MCF 10A (cell line): ENCODE measurements at regions of chr1 and their contacts with region 1.

Region 1: GRCh38 chr1:229479660-229480399 is 28.3 kb downstream of the NUP133 start:
- DNase-seq: no peak
- H3K4me3 Mint-ChIP-seq: no peak overlapping the region
- H3K27ac Mint-ChIP-seq: peak overlapping the region; percentile 0
- H3K4me1 Mint-ChIP-seq: no peaks in the 10 kb centered on the region
- H3K27me3 Mint-ChIP-seq: no peaks in the 10 kb centered on the region
- CTCF ChIP-seq: no peak

Region 2: DNA sequence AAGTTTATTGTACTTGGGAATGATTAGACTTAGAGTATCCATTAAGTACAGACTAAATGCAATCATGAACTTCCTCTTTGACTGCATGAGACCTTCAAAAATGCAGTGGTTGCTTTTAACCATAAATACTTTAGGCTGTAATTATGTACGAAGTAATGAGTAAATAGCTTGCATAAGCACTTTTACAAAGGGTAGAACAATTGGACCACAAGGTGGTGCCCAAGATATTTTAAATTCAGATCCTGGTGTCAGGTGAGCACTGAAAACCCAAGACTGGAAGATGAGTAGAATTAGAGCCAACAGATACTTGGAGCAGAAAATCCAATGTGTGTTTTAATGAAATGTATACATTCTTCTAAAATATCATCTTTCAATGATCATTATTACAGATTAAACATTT is 787.9 kb before region 1 on chr1:
- CTCF ChIA-PET with region 1: interaction called, 10 read pairs
- POLR2A ChIA-PET with region 1: interaction called, 3 read pairs
- intact Hi-C with region 1: loop called (anchors 1 kb)
- DNase-seq: peak; percentile 84
- H3K4me3 Mint-ChIP-seq: no peak overlapping the region
- H3K27ac Mint-ChIP-seq: no peak overlapping the region
- H3K4me1 Mint-ChIP-seq: peaks cover 18% of the 10 kb centered on the region
- H3K27me3 Mint-ChIP-seq: no peaks in the 10 kb centered on the region
- CTCF ChIP-seq: peak; percentile 85

Region 3: GRCh38 chr1:229440851-229441537 is 38.8 kb before region 1 on chr1:
- CTCF ChIA-PET with region 1: interaction called, 10 read pairs
- POLR2A ChIA-PET with region 1: interaction called, 3 read pairs
- intact Hi-C with region 1: no loop called
- DNase-seq: peak; percentile 36
- H3K4me3 Mint-ChIP-seq: no peak overlapping the region
- H3K27ac Mint-ChIP-seq: no peak overlapping the region
- H3K4me1 Mint-ChIP-seq: no peaks in the 10 kb centered on the region
- H3K27me3 Mint-ChIP-seq: no peaks in the 10 kb centered on the region
- CTCF ChIP-seq: no peak

Region 4: DNA sequence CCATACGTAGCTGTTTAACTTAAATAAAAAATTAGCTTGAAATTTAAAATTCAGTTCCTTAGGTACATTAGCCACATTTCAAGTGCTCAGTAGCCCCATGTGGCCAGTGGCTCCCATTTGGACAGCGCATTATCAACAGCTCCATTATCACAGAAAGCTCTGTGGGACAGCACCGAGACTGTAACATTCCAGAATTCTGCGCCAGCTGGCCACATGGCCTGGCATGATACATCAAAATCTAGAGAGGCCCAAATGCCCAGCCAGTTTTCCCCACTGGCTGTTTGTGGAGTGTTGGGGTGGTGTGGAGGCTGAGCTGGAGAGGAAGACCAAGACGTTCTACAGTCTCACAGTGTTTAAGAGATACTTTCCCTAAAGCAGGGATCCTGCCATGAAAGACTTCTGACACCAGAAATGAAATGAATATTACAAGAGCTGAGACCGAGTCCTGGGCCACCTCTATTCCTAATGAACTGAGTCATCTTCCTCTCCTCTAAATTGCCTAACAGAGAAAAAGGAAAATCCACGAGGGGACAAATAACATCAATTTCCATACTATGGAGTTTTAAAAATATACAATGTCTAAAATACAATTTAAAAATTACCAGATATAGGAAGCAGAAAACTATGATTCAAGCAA is 18.7 kb before region 1 on chr1:
- CTCF ChIA-PET with region 1: interaction called, 50 read pairs
- POLR2A ChIA-PET with region 1: interaction called, 6 read pairs
- intact Hi-C with region 1: no loop called
- DNase-seq: no peak
- H3K4me3 Mint-ChIP-seq: no peak overlapping the region
- H3K27ac Mint-ChIP-seq: no peak overlapping the region
- H3K4me1 Mint-ChIP-seq: peaks cover 4% of the 10 kb centered on the region
- H3K27me3 Mint-ChIP-seq: no peaks in the 10 kb centered on the region
- CTCF ChIP-seq: no peak

Region 5: DNA sequence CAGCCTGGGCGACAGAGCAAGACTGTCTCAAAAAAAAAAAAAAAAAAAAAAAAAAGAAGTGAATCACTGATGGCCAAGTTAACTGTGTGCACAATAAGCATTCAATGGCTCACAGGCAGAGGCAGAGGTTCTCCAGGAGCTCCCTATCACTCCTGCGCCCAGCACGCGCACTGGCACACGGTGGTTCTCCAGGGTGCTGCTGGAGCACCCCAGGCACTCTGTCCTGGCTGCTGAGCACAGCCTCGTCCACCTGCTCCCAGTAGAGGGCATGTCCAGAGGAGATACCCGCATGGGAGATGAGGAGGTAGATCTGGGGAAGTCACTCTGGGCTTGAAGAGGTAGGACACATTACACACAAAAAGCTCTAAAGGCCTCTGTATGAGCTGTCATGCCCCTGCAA is 49.8 kb after region 1 on chr1:
- CTCF ChIA-PET with region 1: interaction called, 12 read pairs
- POLR2A ChIA-PET with region 1: no interaction called
- intact Hi-C with region 1: no loop called
- DNase-seq: no peak
- H3K4me3 Mint-ChIP-seq: no peak overlapping the region
- H3K27ac Mint-ChIP-seq: no peak overlapping the region
- H3K4me1 Mint-ChIP-seq: no peaks in the 10 kb centered on the region
- H3K27me3 Mint-ChIP-seq: no peaks in the 10 kb centered on the region
- CTCF ChIP-seq: no peak

Region 6: DNA sequence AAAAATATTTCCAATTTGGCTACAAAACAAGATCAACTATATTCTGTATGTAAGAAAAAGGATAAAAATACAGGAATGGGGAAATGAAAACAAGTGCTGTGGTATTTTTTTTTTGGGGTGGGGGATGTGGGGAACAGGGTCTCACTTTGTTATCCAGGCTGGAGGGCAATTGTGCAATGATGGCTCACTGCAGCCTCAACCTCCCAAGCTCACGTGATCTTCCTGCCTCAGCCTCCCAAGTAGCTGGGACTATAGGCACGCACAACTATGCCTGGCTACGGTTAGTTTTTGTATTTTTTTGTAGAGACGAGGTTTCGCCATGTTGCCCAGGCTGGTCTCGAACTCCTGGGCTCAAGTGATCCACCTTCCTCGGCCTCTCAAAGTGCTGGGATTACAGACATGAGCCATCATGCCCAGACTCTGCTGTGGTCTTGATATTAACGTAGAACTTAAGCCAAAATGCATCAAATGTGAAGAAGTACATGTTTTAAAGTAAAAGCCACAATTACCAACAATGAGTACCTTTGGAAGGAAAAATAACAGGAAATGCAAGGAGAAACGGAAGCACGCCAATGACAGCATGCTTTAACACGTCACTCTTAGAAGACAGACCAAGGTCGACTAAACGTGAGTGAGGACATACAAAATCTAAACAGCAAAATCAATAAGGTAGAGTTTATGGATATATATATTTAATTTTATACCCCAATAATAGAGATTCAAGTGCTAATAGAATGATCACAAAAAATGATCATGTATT is 87.5 kb after region 1 on chr1:
- CTCF ChIA-PET with region 1: no interaction called
- POLR2A ChIA-PET with region 1: no interaction called
- intact Hi-C with region 1: no loop called
- DNase-seq: no peak
- H3K4me3 Mint-ChIP-seq: no peak overlapping the region
- H3K27ac Mint-ChIP-seq: no peak overlapping the region
- H3K4me1 Mint-ChIP-seq: no peaks in the 10 kb centered on the region
- H3K27me3 Mint-ChIP-seq: no peaks in the 10 kb centered on the region
- CTCF ChIP-seq: no peak